PC-3 (cell line): ENCODE measurements at regions of chr2 and their contacts with region 1.

Region 1: DNA sequence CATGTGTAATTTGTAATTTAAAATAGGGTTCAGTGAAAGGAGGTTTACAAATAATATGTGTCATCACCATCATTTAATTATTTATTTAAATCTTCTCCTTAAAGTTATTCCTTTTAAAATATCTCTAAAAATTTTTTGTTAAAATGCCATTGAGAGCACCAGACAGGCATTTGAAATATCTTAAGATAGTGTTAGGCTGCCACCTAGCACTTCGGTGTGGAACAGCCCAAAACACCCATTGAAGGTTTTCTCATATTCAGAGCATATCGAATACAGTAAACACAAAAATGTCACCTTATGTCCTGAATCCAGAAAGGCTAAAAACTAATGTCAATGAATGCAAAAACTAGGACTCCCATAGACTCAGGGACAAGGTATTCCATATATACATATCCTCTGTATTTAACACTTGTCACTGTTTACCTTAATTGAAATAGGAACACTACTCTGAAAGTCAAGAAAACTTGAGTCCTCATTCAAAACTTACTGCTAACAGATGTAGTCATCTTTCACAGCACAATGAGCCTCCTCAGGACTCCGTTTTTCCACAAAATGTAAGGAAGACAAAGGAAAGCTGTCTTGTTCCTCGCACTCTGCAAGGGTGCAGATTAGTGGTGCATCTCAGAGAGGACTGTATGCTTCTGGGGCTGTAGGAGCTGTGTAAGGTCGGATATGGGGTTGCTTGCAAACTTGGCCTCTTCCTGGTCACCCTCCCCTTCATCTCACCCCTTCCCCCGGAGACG is 329.5 kb downstream of the PAX3 start:
- DNase-seq: peak; percentile 63
- ATAC-seq: peak; percentile 84
- H3K4me3 ChIP-seq: no peak overlapping the region
- H3K27ac ChIP-seq: no peak overlapping the region
- H3K4me1 ChIP-seq: no peaks in the 10 kb centered on the region
- H3K27me3 ChIP-seq: 0 out of 2 replicates have a peak, but pooled peaks cover 2% of the 10 kb centered on the region
- CTCF ChIP-seq: peak; percentile 77

Region 2: DNA sequence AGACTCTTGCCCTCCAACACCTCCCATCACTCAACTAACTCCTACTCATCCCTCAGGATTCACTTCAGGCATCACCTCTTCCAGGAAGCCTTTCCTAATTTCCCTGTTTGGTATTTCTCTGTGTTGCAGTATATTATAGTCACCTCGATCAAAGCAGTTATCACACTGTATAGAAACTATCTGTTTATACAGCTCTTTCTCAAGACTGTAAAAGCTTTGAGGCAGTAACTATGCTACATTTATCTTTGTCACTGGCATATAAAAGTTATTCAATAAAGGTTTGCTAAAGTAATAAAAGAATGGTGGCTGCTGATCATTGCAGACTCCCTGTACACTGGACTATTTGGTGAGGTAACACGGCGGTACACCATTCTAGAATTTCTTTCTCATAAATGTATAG is 44.6 kb after region 1 on chr2:
- CTCF ChIA-PET with region 1: no interaction called
- POLR2A ChIA-PET with region 1: no interaction called
- intact Hi-C with region 1: loop called (anchors 5 kb)
- DNase-seq: no peak
- ATAC-seq: no peak
- H3K4me3 ChIP-seq: no peak overlapping the region
- H3K27ac ChIP-seq: no peak overlapping the region
- H3K4me1 ChIP-seq: no peaks in the 10 kb centered on the region
- H3K27me3 ChIP-seq: peaks cover 53% of the 10 kb centered on the region
- CTCF ChIP-seq: no peak